ENCODE measurements at regions of chr10 and their contacts with region 1.

Region 1: GRCh38 chr10:123154092-123154921 is at the start of gene BUB3:
- DNase-seq: peak; percentile 99 to 100 (median 99)
- H3K4me3 ChIP-seq: peak within 1 kb of the TSS; percentile 81 to 97 (median 90)
- H3K4me3 Mint-ChIP-seq: peak within 1 kb of the TSS; percentile 96 to 99
- H3K27ac ChIP-seq: peak within 1 kb of the TSS; percentile 46 to 86
- H3K27ac Mint-ChIP-seq: peak within 1 kb of the TSS; percentile 87 to 95 (median 93)
- H3K4me1 ChIP-seq: peaks cover 30 to 43% of the 10 kb centered on the region in 2 donors
- H3K4me1 Mint-ChIP-seq: peaks cover 53% of the 10 kb centered on the region
- H3K27me3 ChIP-seq: peaks cover 33 to 43% of the 10 kb centered on the region in 2 donors
- H3K27me3 Mint-ChIP-seq: peaks cover 40 to 43% (median 42%) of the 10 kb centered on the region in 3 donors
- CTCF ChIP-seq: no peak
- polyA plus RNA-seq, gene BUB3: 61.2 to 96.4 (median 80.4) TPM

Region 2: DNA sequence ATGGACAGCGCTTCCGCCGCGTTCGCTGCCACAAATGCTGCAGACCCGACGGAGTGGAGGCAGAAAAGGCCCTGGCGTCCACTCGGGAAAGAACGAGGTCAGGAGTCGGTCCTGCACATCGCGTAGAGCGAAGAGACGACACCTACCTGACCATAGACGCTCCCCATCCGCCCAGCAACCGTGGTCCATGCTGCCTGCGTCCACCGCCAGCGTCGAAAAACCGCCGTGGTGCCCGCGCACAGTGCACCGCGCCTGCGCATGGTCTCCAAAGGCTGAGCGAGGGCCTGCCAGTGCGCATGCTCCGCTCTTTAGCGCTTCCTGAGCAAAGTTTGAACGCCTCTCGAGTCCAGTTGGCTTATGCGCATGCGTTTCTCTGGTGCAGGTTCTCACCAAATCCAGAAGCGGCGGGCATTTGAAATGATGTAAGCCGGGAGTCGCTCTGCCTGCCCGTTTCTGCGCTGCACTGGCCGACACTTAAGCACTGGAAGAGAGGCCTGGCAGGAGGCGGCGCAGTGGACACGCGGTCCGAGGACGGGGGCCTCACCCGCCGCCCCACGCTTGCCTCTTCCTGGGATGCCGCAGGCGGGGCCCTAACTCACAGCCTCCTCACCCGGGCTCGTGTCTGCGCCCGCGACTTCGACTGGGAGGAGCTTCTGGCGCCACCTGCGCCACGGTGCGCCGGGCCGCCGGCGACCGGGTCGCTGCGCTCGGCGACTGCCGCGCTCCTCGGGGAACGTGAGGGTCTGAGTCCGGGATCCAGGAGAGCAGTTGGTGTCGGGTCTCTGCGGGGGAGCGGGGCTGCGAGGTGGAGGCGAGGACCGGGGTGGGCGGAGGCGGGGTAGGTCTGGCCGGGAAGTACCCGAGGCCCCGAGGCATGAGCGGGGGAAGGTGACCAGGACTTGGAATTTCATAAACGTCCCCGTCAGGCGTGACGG is 274.7 kb before region 1 on chr10 and contains the start of gene FAM24B:
- intact Hi-C with region 1: loop called in 1 of 2 experiments (anchors 10 kb)
- DNase-seq: peak; percentile 86 to 95 (median 91)
- H3K4me3 ChIP-seq: peak within 1 kb of the TSS; percentile 30 to 76 (median 49)
- H3K4me3 Mint-ChIP-seq: peak within 1 kb of the TSS; percentile 84 to 89
- H3K27ac ChIP-seq: peak within 1 kb of the TSS; percentile 24 to 30
- H3K27ac Mint-ChIP-seq: peak within 1 kb of the TSS; percentile 30 to 85 (median 71)
- H3K4me1 ChIP-seq: peaks cover 15 to 16% of the 10 kb centered on the region in 2 donors
- H3K4me1 Mint-ChIP-seq: peaks cover 33% of the 10 kb centered on the region
- H3K27me3 ChIP-seq: peaks cover 3 to 5% of the 10 kb centered on the region in 2 donors
- H3K27me3 Mint-ChIP-seq: peaks cover 2 to 25% (median 12%) of the 10 kb centered on the region in 3 donors
- CTCF ChIP-seq: no peak
- polyA plus RNA-seq, gene FAM24B: 0.64 to 3.3 (median 2.3) TPM

Region 3: GRCh38 chr10:123008439-123009205 is 145.7 kb before region 1 on chr10 and contains the starts of genes ACADSB and IKZF5:
- intact Hi-C with region 1: loop called (anchors 2 kb)
- DNase-seq: peak; percentile 91 to 98 (median 98)
- H3K4me3 ChIP-seq: peak within 1 kb of the TSS; percentile 86 to 100 (median 93)
- H3K4me3 Mint-ChIP-seq: peak within 1 kb of the TSS; percentile 99 to 100
- H3K27ac ChIP-seq: peak within 1 kb of the TSS; percentile 96 to 97
- H3K27ac Mint-ChIP-seq: peak within 1 kb of the TSS; percentile 99 to 100 (median 100)
- H3K4me1 ChIP-seq: peaks cover 25 to 29% of the 10 kb centered on the region in 2 donors
- H3K4me1 Mint-ChIP-seq: peaks cover 28% of the 10 kb centered on the region
- H3K27me3 ChIP-seq: no peaks in the 10 kb centered on the region
- H3K27me3 Mint-ChIP-seq: peaks cover 0 to 3% (median 1%) of the 10 kb centered on the region in 3 donors
- CTCF ChIP-seq: no peak
- polyA plus RNA-seq, gene ACADSB: 3.9 to 14.7 (median 7.5) TPM
- polyA plus RNA-seq, gene IKZF5: 8.6 to 12.8 (median 9.8) TPM

Region 4: DNA sequence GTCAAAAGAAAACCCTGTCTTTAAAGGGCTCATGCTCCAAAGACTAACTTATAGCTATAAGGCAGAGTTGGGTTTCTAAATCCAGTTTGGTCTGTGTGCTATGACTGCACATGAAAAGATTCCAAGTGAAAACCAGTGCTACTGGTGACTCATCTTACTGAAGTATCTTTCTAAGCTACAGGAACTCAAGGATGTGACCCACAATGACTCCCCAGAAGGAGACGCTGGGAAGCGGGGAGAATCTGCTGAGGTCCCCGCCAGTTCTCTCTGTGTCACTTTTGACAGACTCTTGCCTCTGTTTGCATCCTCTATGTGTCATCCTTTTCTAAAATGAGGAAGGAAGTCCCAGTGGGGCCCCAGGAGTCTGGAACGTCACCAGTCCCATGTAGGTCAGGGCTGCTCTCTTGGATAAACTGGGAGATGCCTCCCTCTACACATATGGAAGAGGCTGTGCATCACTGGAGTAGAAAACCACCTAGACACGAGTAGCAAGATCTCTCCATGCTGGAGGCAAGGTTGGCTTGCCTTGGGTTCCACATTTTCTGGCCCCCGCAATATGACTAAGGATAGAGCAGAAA is 483.1 kb after region 1 on chr10:
- intact Hi-C with region 1: no loop called
- DNase-seq: no peak
- H3K4me3 ChIP-seq: no peak overlapping the region
- H3K4me3 Mint-ChIP-seq: no peak overlapping the region
- H3K27ac ChIP-seq: no peak overlapping the region
- H3K27ac Mint-ChIP-seq: no peak overlapping the region
- H3K4me1 ChIP-seq: no peaks in the 10 kb centered on the region
- H3K4me1 Mint-ChIP-seq: peaks cover 3% of the 10 kb centered on the region
- H3K27me3 ChIP-seq: no peaks in the 10 kb centered on the region
- H3K27me3 Mint-ChIP-seq: peaks cover 4 to 6% (median 5%) of the 10 kb centered on the region in 3 donors
- CTCF ChIP-seq: no peak

Region 5: GRCh38 chr10:124791378-124792348 is 1637.4 kb after region 1 on chr10 and contains the start of gene EEF1AKMT2:
- intact Hi-C with region 1: loop called in 1 of 2 experiments (anchors 10 kb)
- DNase-seq: peak; percentile 74 to 82 (median 80)
- H3K4me3 ChIP-seq: peak within 1 kb of the TSS; percentile 83 to 97 (median 96)
- H3K4me3 Mint-ChIP-seq: peak within 1 kb of the TSS; percentile 92 to 96
- H3K27ac ChIP-seq: peak within 1 kb of the TSS; percentile 70 to 94
- H3K27ac Mint-ChIP-seq: peak within 1 kb of the TSS; percentile 80 to 96 (median 93)
- H3K4me1 ChIP-seq: peaks cover 7 to 11% of the 10 kb centered on the region in 2 donors
- H3K4me1 Mint-ChIP-seq: peaks cover 14% of the 10 kb centered on the region
- H3K27me3 ChIP-seq: no peaks in the 10 kb centered on the region
- H3K27me3 Mint-ChIP-seq: peaks cover 0 to 1% (median 0%) of the 10 kb centered on the region in 3 donors
- CTCF ChIP-seq: peak; percentile 46
- polyA plus RNA-seq, gene EEF1AKMT2: 7.6 to 13.6 (median 8.2) TPM

Region 6: DNA sequence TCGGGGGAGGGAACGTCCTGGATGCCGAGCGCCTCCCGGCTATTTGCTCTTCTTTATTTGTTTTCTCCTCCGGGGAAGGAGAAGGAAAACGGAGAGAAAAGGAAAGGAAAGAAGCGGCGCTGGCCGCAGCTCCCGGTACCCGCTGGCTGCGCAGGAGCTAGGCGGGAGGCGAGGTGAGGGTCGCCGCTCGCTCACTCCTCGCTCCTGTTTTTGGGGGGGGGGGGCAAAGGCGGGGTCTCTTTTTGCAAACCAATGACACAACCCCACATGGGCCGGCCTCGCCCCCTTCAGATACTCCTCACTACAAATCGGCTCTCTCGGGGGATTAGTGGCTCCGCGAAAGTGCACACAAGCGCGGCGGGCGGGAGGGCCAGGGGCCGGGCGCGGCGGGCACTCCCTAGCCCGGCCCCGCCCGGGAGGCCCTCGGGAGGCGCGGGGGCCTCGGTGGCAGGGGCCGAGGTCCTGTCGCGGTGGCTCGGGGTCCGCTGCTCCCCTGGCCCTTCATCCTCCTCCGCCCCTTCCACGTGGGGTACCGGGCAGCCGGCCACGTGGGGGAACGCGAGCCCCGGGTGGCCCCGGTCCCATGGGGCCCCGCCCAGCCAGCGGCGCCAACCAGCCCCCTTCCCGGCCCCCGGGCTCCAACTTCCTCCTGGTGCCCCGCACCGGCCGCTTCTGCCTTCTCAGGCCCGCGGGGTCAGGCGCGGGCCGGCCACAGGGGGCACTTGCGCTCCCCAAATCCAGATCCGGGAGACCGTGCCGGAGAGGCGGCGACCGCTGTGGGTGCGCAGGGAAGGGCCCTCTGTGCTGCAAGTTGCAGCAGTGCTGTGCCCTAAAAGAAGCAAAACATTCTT is 2006.8 kb after region 1 on chr10:
- intact Hi-C with region 1: loop called in 1 of 2 experiments (anchors 10 kb)
- DNase-seq: peak; percentile 81 to 86 (median 83)
- H3K4me3 ChIP-seq: peak overlapping the region; percentile 78 to 94 (median 80)
- H3K4me3 Mint-ChIP-seq: peak overlapping the region; percentile 81 to 90
- H3K27ac ChIP-seq: peak overlapping the region; percentile 74 to 87
- H3K27ac Mint-ChIP-seq: peak overlapping the region; percentile 59 to 90 (median 77)
- H3K4me1 ChIP-seq: peaks cover 25 to 39% of the 10 kb centered on the region in 2 donors
- H3K4me1 Mint-ChIP-seq: peaks cover 30% of the 10 kb centered on the region
- H3K27me3 ChIP-seq: peaks cover 0 to 8% of the 10 kb centered on the region in 2 donors
- H3K27me3 Mint-ChIP-seq: peaks cover 10 to 18% (median 16%) of the 10 kb centered on the region in 3 donors
- CTCF ChIP-seq: peak; percentile 74

Measured in CD14-positive monocyte (primary cell).